Common myeloid progenitor, CD34-positive (primary cell): ENCODE measurements at regions of chr9 and their contacts with region 1.

Region 1: DNA sequence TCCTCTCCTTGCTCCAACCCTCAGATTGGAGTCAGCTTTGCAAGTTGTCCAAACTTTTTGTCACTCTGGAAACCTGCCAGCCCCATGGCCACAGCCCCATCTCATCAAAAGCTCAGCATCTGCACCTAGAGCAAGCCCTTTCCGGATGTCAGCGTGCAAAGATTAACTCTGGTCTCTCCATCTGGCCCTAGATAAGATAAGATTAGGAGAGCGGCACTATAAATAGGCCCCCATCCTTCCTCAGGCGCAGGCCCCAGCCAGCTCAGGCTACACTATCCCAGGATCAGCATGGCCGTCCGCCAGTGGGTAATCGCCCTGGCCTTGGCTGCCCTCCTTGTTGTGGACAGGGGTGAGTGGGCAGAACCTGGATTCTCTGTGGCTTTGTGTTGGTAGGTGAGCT is at the start of gene SPINK4:
- DNase-seq: peak; percentile 93 to 98 (median 98)
- H3K4me3 ChIP-seq: no peak within 1 kb of the TSS
- H3K27ac ChIP-seq: no peak within 1 kb of the TSS
- H3K4me1 ChIP-seq: peaks cover 0 to 23% (median 12%) of the 10 kb centered on the region in 4 experiments
- H3K27me3 ChIP-seq: no peaks in the 10 kb centered on the region

Region 2: GRCh38 chr9:33211695-33212393 is 28.1 kb before region 1 on chr9:
- CTCF ChIA-PET with region 1: no interaction called
- POLR2A ChIA-PET with region 1: no interaction called
- DNase-seq: no peak
- H3K4me3 ChIP-seq: no peak overlapping the region
- H3K27ac ChIP-seq: no peak overlapping the region
- H3K4me1 ChIP-seq: no peaks in the 10 kb centered on the region
- H3K27me3 ChIP-seq: no peaks in the 10 kb centered on the region

Region 3: GRCh38 chr9:33225319-33226149 is 14.4 kb before region 1 on chr9:
- CTCF ChIA-PET with region 1: interaction called, 30 read pairs
- POLR2A ChIA-PET with region 1: no interaction called
- DNase-seq: peak; percentile 87 to 95 (median 93)
- H3K4me3 ChIP-seq: peak overlapping the region in 1 of 7 experiments; percentile 33
- H3K27ac ChIP-seq: peak overlapping the region in 1 of 2 experiments; percentile 12
- H3K4me1 ChIP-seq: peaks cover 9 to 42% (median 31%) of the 10 kb centered on the region in 4 experiments
- H3K27me3 ChIP-seq: no peaks in the 10 kb centered on the region

Region 4: DNA sequence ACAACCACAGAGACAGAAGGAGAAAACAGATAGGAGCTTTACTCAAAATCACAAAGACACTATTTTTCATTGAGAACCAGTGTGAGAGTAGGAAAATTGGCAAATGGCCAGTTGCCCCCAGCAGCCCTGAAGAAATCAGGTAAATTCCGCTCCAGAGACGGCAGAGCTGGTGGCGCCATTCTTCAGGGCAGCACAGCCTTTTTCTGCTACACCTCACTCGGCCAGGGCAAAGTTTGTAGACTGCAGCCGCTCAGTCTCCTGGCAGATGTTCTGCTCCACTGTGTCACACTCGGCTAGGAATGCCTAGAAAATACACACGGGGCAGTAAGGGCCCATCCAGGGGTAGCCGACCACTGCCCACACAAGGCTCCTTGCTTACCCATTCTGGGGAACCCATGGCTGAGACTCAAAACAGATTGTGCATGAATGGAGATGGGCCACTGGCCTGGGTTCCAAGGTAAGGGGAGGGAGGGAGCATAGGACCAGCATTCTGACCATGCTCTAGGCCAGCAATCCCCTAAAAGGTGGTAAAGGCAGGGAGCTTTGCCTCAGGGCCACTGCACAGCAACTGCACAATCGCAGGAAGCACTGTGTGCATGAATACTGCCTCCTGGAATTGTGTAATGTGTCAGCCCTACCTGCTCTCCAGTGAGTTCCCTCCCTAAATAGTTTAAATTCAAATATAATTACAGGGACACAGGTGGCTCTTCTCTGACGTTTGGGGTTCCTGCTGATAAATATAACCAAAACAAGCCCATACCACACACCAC is 15.3 kb after region 1 on chr9:
- CTCF ChIA-PET with region 1: interaction called, 17 read pairs
- POLR2A ChIA-PET with region 1: no interaction called
- DNase-seq: no peak
- H3K4me3 ChIP-seq: no peak overlapping the region
- H3K27ac ChIP-seq: no peak overlapping the region
- H3K4me1 ChIP-seq: no peaks in the 10 kb centered on the region
- H3K27me3 ChIP-seq: no peaks in the 10 kb centered on the region